ENCODE measurements at regions of chr3 and their contacts with region 1.

Region 1: DNA sequence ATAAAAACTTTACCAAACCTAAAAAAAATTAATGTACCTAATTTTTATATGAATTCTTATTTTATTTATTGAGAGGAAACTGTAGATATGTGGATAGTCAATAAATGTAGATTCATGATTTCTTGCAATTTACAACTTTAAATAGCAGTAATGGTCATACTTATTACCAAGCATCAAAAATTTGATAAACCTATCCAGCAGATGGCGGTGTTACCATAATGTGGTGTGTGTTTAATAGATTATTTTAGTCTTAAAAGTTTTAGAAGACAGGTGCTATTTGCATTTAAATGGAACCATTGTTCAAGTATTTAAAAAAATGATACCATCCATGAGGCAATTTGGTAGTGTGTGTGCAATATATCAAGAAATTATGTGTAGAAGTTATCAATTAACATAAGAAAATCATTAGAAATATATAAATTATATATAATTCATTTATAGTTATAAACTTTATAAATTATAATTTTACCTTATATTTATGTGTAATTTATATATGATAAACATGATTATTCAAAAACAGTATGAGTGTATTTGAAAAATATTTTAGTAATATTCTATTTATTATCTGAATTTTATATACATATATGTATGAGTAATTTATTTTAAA is 176.0 kb upstream of the BCHE start:
- DNase-seq: peak; percentile 10
- ATAC-seq: no peak
- H3K4me3 ChIP-seq: no peak overlapping the region
- H3K27ac ChIP-seq: no peak overlapping the region
- H3K4me1 ChIP-seq: no peaks in the 10 kb centered on the region
- H3K27me3 ChIP-seq: no peaks in the 10 kb centered on the region
- CTCF ChIP-seq: peak; percentile 35; the same call in 1 of the 2 replicates

Region 2: GRCh38 chr3:166917437-166917836 is 904.3 kb after region 1 on chr3:
- CTCF ChIA-PET with region 1: no interaction called
- POLR2A ChIA-PET with region 1: no interaction called
- in situ Hi-C with region 1: no loop called
- intact Hi-C with region 1: no loop called
- DNase-seq: no peak
- ATAC-seq: no peak
- H3K4me3 ChIP-seq: no peak overlapping the region
- H3K27ac ChIP-seq: no peak overlapping the region
- H3K4me1 ChIP-seq: no peaks in the 10 kb centered on the region
- H3K27me3 ChIP-seq: no peaks in the 10 kb centered on the region
- CTCF ChIP-seq: no peak

Region 3: GRCh38 chr3:167346171-167346570 is 1333.0 kb after region 1 on chr3:
- CTCF ChIA-PET with region 1: interaction called, 3 read pairs
- POLR2A ChIA-PET with region 1: no interaction called
- in situ Hi-C with region 1: no loop called
- intact Hi-C with region 1: loop called (anchors 5 kb)
- DNase-seq: no peak
- ATAC-seq: no peak
- H3K4me3 ChIP-seq: no peak overlapping the region
- H3K27ac ChIP-seq: no peak overlapping the region
- H3K4me1 ChIP-seq: no peaks in the 10 kb centered on the region
- H3K27me3 ChIP-seq: no peaks in the 10 kb centered on the region
- CTCF ChIP-seq: no peak